Posterior vena cava (tissue), 2 donors: ENCODE measurements at regions of chr17 and their contacts with region 1.

Region 1: GRCh38 chr17:56727876-56728620 is 105.7 kb downstream of the C17orf67 start:
- DNase-seq: no peak

Region 2: DNA sequence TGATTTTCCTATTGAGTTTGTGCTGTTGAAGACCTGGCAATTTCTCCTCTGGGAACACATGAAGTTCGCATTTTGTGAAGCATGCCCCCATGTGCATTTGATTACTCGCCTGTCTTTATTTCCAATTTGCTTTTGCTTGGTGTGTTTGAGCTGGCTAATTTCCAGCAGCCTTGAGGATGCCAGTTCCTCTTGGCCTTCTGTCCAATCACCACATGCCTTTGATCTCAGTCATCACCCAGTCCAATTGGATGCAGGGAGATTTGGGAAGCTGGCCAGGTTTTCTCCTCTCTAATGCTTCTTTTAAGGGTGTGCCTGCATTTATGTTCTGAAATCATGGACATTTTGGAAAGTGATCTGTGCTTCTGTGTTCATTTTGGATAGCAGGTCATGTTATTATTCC is 1001.6 kb before region 1 on chr17:
- intact Hi-C with region 1: no loop called
- DNase-seq: no peak

Region 3: DNA sequence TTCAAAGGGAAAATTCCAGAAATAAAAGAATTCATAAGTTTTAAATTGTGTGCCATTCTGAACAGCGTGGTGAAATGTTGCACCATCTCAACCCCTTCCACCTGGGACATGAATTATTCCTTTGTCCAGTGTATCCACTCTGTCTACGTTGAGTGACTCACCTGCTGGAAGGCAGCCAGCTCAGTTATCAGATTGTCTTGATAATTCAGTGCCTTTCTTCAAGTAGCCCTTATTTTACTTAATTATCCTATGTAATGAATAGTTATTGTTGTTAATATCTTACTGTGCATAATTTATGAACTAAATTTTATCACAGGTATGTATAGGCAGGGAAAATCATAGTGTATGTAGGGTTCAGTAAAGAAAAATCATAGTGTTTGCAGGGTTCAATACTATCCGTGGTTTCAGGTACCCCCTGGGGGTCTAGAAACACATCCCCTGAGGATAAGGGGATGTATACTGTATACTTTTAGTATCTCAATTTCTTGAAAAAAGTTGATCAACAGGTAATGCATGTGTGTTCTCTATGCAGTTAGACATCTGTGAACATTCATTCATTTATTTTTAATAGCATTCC is 984.9 kb before region 1 on chr17:
- intact Hi-C with region 1: loop called in 1 of 2 experiments (anchors 5 kb)
- DNase-seq: no peak

Region 4: GRCh38 chr17:56597495-56597990 is 130.5 kb before region 1 on chr17:
- intact Hi-C with region 1: no loop called
- DNase-seq: no peak